ENCODE measurements at regions of chr3 and their contacts with region 1.

Region 1: DNA sequence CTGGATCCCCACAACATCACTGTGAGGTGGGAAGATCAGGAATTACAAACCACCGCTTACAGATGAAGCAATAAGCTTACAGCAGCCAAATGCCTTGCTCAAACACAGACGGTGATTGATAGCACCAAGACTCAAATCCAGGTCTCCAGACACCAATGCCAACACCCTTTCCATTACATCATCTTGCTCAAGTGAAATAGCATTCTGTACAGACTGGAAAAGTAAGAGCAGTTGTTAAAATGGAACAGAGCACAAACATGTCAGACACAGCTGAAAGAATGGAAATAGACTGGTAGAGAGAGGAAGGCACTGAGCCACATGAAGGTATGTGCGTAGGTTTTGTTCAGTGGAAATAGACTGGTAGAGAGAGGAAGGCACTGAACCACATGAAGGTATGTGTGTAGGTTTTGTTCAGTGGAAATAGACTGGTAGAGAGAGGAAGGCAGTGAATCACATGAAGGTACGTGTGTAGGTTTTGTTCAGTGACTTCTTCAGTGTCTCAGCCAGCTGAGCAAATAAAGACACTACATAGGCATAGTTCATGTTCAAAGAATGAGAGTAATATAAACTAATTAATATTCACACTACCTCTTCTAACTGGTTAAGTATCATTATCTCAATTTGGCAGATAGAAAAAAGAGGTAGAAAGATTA is 15.6 kb downstream of the CLDN1 start:
- DNase-seq: peak; percentile 53
- ATAC-seq: peak; percentile 94
- H3K4me3 Mint-ChIP-seq: peak overlapping the region; percentile 23
- H3K27ac Mint-ChIP-seq: peak overlapping the region; percentile 91
- H3K4me1 Mint-ChIP-seq: peaks cover 34% of the 10 kb centered on the region
- H3K27me3 Mint-ChIP-seq: peaks cover 6% of the 10 kb centered on the region

Region 2: DNA sequence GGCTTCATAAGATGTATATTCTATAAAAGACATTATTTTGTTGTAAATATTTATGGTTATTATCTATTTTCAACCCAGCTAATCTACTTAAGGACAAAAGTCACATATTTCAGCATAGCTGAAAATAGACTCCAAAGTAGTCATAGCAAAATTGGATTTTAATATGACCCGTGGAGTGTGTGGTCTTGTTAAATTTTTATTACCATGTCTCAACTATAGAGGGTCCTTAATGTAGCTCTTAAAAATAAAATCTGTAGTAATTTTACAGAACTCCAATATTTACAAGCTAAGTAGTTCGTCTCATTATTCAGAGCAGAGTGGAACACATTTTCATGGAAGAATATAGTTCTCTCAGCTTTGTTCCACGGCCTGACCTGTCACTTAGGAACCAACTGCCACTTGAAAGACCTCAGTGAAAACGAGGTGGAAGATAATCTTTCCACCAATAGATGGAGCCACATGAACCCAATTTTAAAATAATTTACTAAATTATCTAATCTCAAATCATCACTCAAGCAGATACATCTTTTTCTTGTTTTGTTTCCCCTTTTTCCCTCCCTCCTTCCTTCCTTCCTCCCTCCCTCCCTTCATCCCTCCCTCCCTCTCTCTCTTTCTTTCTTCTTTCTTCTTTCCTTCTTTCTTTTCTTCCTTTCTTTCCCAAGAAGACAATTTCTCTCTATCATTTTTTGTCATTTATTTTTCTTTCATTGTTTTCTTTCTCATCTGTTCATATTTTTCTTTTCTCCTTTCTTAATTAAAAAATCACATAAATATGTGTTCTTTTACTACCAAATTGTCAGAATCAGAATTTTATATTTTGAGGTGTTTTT is 81.6 kb before region 1 on chr3:
- CTCF ChIA-PET with region 1: interaction called, 4 read pairs
- POLR2A ChIA-PET with region 1: no interaction called
- intact Hi-C with region 1: loop called in 1 of 2 experiments (anchors 10 kb)
- DNase-seq: no peak
- ATAC-seq: no peak
- H3K4me3 Mint-ChIP-seq: no peak overlapping the region
- H3K27ac Mint-ChIP-seq: no peak overlapping the region
- H3K4me1 Mint-ChIP-seq: peaks cover 3% of the 10 kb centered on the region
- H3K27me3 Mint-ChIP-seq: peaks cover 4% of the 10 kb centered on the region

Region 3: GRCh38 chr3:190566043-190566933 is 259.6 kb after region 1 on chr3:
- CTCF ChIA-PET with region 1: no interaction called
- POLR2A ChIA-PET with region 1: no interaction called
- intact Hi-C with region 1: loop called in 1 of 2 experiments (anchors 5 kb)
- DNase-seq: peak; percentile 92
- ATAC-seq: peak; percentile 88
- H3K4me3 Mint-ChIP-seq: no peak overlapping the region
- H3K27ac Mint-ChIP-seq: peak overlapping the region; percentile 97
- H3K4me1 Mint-ChIP-seq: peaks cover 61% of the 10 kb centered on the region
- H3K27me3 Mint-ChIP-seq: no peaks in the 10 kb centered on the region